Naive thymus-derived CD4-positive, alpha-beta T cell (primary cell): ENCODE measurements at regions of chr1 and their contacts with region 1.

Region 1: DNA sequence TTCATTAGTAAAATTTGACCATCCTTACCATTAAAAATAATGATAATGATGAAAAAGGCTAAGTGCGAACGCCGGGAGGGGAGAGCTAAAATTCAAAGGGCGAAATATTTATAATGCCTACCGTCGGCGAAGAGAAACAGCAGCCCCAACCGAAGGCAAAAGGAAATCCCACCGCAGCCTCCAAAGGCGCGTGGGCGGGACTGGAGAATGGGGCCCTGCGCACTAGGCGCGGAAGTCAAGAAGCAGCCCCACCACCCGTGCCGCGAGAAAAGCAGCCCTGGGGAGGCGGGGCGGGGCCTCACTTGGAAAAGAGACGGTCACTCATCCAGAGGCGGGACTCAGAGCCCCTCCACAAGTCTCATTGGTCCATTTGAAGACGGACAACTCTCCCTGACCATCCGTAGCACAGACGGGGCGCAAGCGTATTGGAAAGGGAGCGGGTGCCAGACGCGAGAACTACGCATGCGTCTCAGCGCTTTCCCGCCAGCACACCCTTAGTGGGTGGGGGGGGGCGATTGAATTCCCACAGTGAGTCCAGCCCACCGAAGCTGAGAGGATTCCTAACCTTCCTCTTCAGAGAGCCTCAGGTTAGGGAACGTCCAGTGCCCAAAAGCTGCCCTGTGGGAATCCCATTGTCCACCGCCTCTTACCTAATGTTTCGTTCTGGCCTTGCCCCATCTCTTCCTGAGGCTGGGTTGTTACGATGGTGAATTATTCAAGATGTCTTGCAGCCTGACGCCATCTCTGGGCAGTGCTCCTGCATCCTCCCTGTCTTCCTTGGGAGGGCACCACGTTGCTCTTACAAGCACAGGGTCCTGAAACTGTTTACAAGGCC is 19.0 kb downstream of the MTX1 start:
- DNase-seq: peak; percentile 89 to 99 (median 98)
- ATAC-seq: peak; percentile 97
- H3K4me3 ChIP-seq: peak overlapping the region; percentile 75
- H3K4me3 Mint-ChIP-seq: peak overlapping the region; percentile 79 to 95 (median 88)
- H3K27ac ChIP-seq: peak overlapping the region; percentile 75
- H3K27ac Mint-ChIP-seq: peak overlapping the region; percentile 77 to 97 (median 88)
- H3K4me1 ChIP-seq: peaks cover 11 to 15% of the 10 kb centered on the region in 2 donors
- H3K4me1 Mint-ChIP-seq: peaks cover 11 to 26% (median 19%) of the 10 kb centered on the region in 7 donors
- H3K27me3 ChIP-seq: no peaks in the 10 kb centered on the region
- H3K27me3 Mint-ChIP-seq: peaks cover 0 to 2% (median 0%) of the 10 kb centered on the region in 5 donors

Region 2: DNA sequence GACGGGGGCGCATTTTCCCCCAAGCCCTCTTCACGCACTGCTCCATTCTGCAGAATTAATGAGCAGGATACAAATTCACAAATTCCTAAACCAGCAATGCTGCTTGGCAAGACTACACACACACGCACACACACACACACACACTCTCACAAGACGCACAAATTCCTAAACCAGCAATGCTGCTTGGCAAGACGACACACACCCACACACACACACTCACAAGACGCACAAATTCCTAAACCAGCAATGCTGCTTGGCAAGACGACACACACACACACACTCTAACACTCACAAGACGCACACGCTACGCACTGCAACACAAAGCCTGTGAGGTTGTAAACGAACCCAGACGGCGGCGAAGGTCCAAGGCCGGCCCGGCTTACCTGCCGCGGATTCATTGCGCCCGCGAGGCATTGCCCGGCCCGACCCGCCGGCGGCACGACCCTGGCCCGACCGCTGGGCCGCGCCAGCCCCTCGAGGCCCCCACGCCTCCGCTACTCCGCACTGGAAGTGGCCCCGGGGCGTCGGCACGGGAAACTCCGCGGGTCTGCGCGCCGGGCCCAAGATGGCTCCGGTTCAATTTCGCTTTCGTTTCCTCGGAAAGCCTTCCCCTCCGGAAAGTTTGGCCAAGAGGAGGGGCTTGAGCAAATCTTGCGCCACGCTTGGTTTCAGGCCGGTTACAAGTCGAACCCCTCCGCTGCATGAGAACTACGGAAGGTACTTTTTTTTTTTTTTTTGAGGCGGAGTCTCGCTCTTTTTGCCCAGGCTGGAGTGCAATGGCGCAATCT is 619.7 kb before region 1 on chr1 and contains the start of gene ADAR:
- CTCF ChIA-PET with region 1: no interaction called
- POLR2A ChIA-PET with region 1: no interaction called
- intact Hi-C with region 1: loop called in 1 of 2 experiments (anchors 5 kb)
- DNase-seq: peak; percentile 67 to 95 (median 90)
- ATAC-seq: peak; percentile 92
- H3K4me3 ChIP-seq: peak within 1 kb of the TSS; percentile 78
- H3K4me3 Mint-ChIP-seq: peak within 1 kb of the TSS; percentile 91 to 100 (median 98)
- H3K27ac ChIP-seq: peak within 1 kb of the TSS; percentile 97
- H3K27ac Mint-ChIP-seq: peak within 1 kb of the TSS; percentile 94 to 99 (median 99)
- H3K4me1 ChIP-seq: peaks cover 40 to 42% of the 10 kb centered on the region in 2 donors
- H3K4me1 Mint-ChIP-seq: peaks cover 63 to 90% (median 75%) of the 10 kb centered on the region in 7 donors
- H3K27me3 ChIP-seq: no peaks in the 10 kb centered on the region
- H3K27me3 Mint-ChIP-seq: no peaks in the 10 kb centered on the region
- total RNA-seq, gene ADAR: 206 to 408 (median 237) TPM

Region 3: GRCh38 chr1:155084722-155085503 is 142.6 kb before region 1 on chr1:
- CTCF ChIA-PET with region 1: interaction called, 3 read pairs
- POLR2A ChIA-PET with region 1: interaction called, 3 read pairs
- intact Hi-C with region 1: loop called in 1 of 2 experiments (anchors 2 kb)
- DNase-seq: peak; percentile 87 to 96 (median 93)
- ATAC-seq: peak; percentile 86
- H3K4me3 ChIP-seq: peak overlapping the region; percentile 97
- H3K4me3 Mint-ChIP-seq: peak overlapping the region; percentile 88 to 100 (median 94)
- H3K27ac ChIP-seq: peak overlapping the region; percentile 63
- H3K27ac Mint-ChIP-seq: peak overlapping the region; percentile 88 to 98 (median 93)
- H3K4me1 ChIP-seq: peaks cover 51 to 53% of the 10 kb centered on the region in 2 donors
- H3K4me1 Mint-ChIP-seq: peaks cover 24 to 43% (median 41%) of the 10 kb centered on the region in 7 donors
- H3K27me3 ChIP-seq: peaks cover 28 to 31% of the 10 kb centered on the region in 2 donors
- H3K27me3 Mint-ChIP-seq: peaks cover 17 to 41% (median 23%) of the 10 kb centered on the region in 5 donors

Region 4: GRCh38 chr1:155135415-155136028 is 92.0 kb before region 1 on chr1 and contains the start of gene SLC50A1:
- CTCF ChIA-PET with region 1: no interaction called
- POLR2A ChIA-PET with region 1: no interaction called
- intact Hi-C with region 1: loop called in 1 of 2 experiments (anchors 1 kb)
- DNase-seq: peak; percentile 86 to 96 (median 90)
- ATAC-seq: peak; percentile 93
- H3K4me3 ChIP-seq: peak within 1 kb of the TSS; percentile 99
- H3K4me3 Mint-ChIP-seq: peak within 1 kb of the TSS; percentile 91 to 100 (median 98)
- H3K27ac ChIP-seq: peak within 1 kb of the TSS; percentile 99
- H3K27ac Mint-ChIP-seq: peak within 1 kb of the TSS; percentile 95 to 100 (median 98)
- H3K4me1 ChIP-seq: peaks cover 8 to 15% of the 10 kb centered on the region in 2 donors
- H3K4me1 Mint-ChIP-seq: peaks cover 41 to 58% (median 46%) of the 10 kb centered on the region in 7 donors
- H3K27me3 ChIP-seq: no peaks in the 10 kb centered on the region
- H3K27me3 Mint-ChIP-seq: peaks cover 0 to 2% (median 0%) of the 10 kb centered on the region in 5 donors
- total RNA-seq, gene SLC50A1: 21.1 to 35.6 (median 24.3) TPM

Region 5: DNA sequence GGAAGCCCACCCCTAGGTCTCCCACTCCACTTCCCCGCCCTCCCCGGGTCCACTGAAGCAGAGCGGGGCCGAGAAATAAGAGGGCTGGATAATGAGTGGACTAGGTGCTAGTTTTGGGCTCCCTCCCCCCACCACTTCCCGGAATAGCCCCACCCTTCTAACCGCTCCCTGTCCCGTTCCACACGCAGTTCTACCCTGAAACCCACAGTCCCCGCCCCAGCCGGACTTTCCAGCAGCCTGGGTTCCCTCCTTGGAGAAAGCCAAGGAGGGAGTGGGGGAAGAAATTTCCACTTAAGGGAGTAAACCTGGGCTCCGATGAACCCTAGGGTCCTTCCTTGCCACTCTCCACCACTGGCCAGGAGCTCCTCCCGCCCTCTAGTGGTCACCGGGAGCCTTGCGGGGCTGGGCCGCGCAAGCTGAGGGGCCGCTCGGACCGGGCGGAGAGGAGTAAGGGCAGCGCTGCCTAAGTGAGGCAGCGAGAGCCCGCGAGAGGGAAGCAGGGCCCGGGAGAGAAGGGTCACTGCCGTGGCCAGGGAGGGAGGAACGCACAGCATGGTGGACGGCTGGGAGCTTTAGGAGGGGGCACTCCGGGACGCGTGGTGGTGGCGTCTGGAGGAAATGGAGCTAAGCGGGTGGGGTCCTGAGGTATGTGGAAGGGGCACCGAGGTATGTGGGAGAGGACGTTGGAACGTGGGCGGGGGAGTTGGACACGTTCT is 34.0 kb before region 1 on chr1:
- CTCF ChIA-PET with region 1: interaction called, 18 read pairs
- POLR2A ChIA-PET with region 1: interaction called, 9 read pairs
- intact Hi-C with region 1: loop called (anchors 1 kb)
- DNase-seq: peak in 8 of 9 donors; percentile 38 to 89 (median 54)
- ATAC-seq: peak; percentile 54
- H3K4me3 ChIP-seq: peak overlapping the region; percentile 57
- H3K4me3 Mint-ChIP-seq: peak overlapping the region; percentile 88 to 97 (median 92)
- H3K27ac ChIP-seq: peak overlapping the region; percentile 76
- H3K27ac Mint-ChIP-seq: peak overlapping the region; percentile 92 to 99 (median 97)
- H3K4me1 ChIP-seq: peaks cover 11 to 25% of the 10 kb centered on the region in 2 donors
- H3K4me1 Mint-ChIP-seq: peaks cover 8 to 35% (median 29%) of the 10 kb centered on the region in 7 donors
- H3K27me3 ChIP-seq: no peaks in the 10 kb centered on the region
- H3K27me3 Mint-ChIP-seq: no peaks in the 10 kb centered on the region

Region 6: DNA sequence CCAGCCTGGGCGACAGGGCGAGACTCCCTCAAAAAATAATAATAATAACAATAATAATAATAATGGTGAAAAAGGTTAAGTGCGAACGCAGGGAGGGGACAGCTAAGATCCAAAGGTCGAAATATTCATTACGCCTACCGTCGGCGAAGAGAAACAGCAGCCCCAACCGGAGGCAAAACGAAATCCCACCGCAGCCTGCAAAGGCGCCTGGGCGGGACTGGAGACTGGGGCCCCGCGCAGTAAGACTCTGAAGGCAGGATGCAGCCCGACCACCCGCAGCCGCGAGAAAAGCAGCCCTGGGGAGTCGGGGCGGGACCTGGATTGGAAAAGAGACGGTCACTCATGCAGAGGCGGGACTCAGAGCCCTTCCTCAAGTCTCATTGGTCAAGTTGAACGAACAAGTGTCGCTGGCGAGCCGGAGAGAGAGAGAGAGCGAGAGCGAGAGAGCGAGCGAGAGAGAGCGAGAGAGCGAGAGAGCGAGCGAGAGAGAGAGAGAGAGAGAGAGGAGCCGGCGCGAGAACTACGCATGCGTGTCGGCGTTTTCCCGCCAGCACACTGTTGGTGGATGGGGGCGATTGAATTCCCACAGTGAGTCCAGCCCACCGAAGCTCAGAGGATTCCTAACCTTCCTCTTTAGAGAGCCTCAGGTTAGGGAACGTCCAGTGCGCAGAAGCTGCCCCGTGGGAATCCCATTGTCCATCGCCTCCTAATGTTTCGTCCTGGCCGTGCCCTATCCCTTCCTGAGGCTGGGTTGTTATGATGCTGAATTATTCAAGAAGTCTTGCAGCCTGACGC is 17.1 kb after region 1 on chr1:
- CTCF ChIA-PET with region 1: interaction called, 8 read pairs
- POLR2A ChIA-PET with region 1: interaction called, 11 read pairs
- intact Hi-C with region 1: loop called (anchors 1 kb)
- DNase-seq: peak; percentile 76 to 96 (median 94)
- ATAC-seq: peak; percentile 92
- H3K4me3 ChIP-seq: peak overlapping the region; percentile 63
- H3K4me3 Mint-ChIP-seq: peak overlapping the region; percentile 84 to 97 (median 91)
- H3K27ac ChIP-seq: peak overlapping the region; percentile 73
- H3K27ac Mint-ChIP-seq: peak overlapping the region; percentile 94 to 100 (median 98)
- H3K4me1 ChIP-seq: peaks cover 19 to 20% of the 10 kb centered on the region in 2 donors
- H3K4me1 Mint-ChIP-seq: peaks cover 31 to 50% (median 44%) of the 10 kb centered on the region in 7 donors
- H3K27me3 ChIP-seq: no peaks in the 10 kb centered on the region
- H3K27me3 Mint-ChIP-seq: peaks cover 0 to 6% (median 3%) of the 10 kb centered on the region in 5 donors

Region 7: DNA sequence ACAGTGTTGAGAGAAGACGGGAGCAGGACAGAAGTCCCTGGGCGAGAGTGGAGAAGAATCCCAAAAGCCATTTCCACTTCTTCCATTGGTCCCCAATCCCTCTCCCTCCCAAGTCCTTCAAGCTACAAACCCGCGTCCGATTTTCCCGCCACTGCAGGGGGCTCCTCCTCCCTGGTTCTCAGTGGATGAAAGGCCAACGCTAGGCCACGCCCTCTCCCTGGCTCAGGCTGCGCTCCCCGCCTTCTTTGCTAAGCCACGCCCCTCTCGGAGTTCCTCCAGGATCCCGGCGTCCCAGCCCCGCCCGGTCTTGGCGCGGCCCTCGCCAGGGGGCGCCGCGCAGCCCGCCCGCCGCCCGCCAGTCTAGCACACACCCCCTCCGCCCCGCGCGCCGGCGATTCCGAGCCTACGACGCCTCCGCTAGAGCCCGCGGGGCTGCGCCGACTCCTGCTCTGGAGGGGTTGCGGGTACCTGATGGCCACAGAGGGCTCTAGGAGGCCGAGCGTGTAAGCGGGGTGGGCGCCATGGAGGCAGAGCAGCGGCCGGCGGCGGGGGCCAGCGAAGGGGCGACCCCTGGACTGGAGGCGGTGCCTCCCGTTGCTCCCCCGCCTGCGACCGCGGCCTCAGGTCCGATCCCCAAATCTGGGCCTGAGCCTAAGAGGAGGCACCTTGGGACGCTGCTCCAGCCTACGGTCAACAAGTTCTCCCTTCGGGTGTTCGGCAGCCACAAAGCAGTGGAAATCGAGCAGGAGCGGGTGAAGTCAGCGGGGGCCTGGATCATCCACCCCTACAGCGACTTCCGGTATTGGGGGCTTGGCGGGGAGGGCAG is 49.8 kb after region 1 on chr1 and contains the start of gene HCN3:
- CTCF ChIA-PET with region 1: interaction called, 3 read pairs
- POLR2A ChIA-PET with region 1: interaction called, 4 read pairs
- intact Hi-C with region 1: loop called in 1 of 2 experiments (anchors 1 kb)
- DNase-seq: peak; percentile 68 to 95 (median 70)
- ATAC-seq: peak; percentile 71
- H3K4me3 ChIP-seq: peak within 1 kb of the TSS; percentile 59
- H3K4me3 Mint-ChIP-seq: peak within 1 kb of the TSS; percentile 75 to 90 (median 86)
- H3K27ac ChIP-seq: peak within 1 kb of the TSS; percentile 36
- H3K27ac Mint-ChIP-seq: peak within 1 kb of the TSS in 8 of 9 donors; percentile 44 to 83 (median 69)
- H3K4me1 ChIP-seq: peaks cover 18 to 19% of the 10 kb centered on the region in 2 donors
- H3K4me1 Mint-ChIP-seq: peaks cover 24 to 47% (median 38%) of the 10 kb centered on the region in 7 donors
- H3K27me3 ChIP-seq: no peaks in the 10 kb centered on the region
- H3K27me3 Mint-ChIP-seq: peaks cover 0 to 11% (median 0%) of the 10 kb centered on the region in 5 donors
- total RNA-seq, gene HCN3: 1.6 to 3.3 (median 2.8) TPM